ENCODE measurements at regions of chr19 and their contacts with region 1.

Region 1: DNA sequence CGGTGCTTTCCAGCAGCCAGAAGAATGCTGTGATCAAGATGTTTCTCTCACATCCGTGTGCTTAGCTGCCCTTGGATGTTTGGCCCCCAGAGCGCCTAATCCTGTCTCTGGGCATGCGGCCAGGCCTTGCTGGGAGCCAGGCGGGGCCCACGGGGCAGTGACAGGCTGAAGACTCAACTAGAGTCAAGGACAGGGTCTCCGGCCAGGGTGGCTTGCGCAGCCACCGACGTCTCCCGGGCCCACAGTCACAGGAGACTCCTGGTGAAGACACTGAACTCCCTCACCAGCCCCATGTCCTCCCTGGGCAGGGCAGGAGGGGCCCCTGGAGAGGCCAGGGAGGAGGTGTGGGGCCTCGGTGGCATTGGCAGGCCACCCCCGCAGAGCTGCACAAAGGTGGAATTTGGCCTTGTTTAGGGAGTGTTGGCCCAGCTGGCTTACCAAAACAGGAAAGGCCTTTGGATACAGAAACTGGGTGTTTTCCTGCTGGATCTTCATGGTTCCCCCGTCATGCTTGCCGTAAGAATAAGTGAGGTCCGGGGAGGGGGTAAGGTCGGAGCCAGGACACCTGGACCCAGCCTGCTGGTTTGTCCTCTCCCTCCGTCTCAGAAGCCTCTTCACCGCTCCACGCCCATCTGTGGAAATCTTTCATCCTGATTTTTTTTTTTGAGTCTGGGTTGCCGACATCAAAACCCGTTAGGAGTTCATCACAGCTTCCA is 10.0 kb upstream of the NDUFS7 start:
- DNase-seq: no peak
- ATAC-seq: no peak
- H3K4me3 ChIP-seq: no peak overlapping the region
- H3K27ac ChIP-seq: no peak overlapping the region
- H3K4me1 ChIP-seq: peaks cover 0 to 50% of the 10 kb centered on the region in 2 experiments; a peak in 2 of 5 replicates
- H3K27me3 ChIP-seq: no peaks in the 10 kb centered on the region
- CTCF ChIP-seq: no peak
- EP300 ChIP-seq: no peak
- POLR2A ChIP-seq: no peak
- RAD21 ChIP-seq: no peak

Region 2: GRCh38 chr19:1315470-1316231 is 58.0 kb before region 1 on chr19:
- CTCF ChIA-PET with region 1: no interaction called
- POLR2A ChIA-PET with region 1: no interaction called
- in situ Hi-C with region 1: no loop called
- intact Hi-C with region 1: loop called (anchors 2 kb)
- DNase-seq: peak; percentile 81 to 87 (median 85)
- ATAC-seq: peak; percentile 92
- H3K4me3 ChIP-seq: peak overlapping the region; percentile 21
- H3K27ac ChIP-seq: no peak overlapping the region
- H3K4me1 ChIP-seq: peaks cover 2 to 67% of the 10 kb centered on the region in 2 experiments; a peak in 4 of 5 replicates
- H3K27me3 ChIP-seq: no peaks in the 10 kb centered on the region
- CTCF ChIP-seq: peak; percentile 70 to 89 (median 80)
- EP300 ChIP-seq: no peak
- POLR2A ChIP-seq: no peak
- RAD21 ChIP-seq: peak; percentile 73

Measured in K562 (cell line).